Activated CD8-positive, alpha-beta T cell treated with anti-CD3 and anti-CD28 coated beads for 36 hours (primary cell): ENCODE measurements at regions of chr11 and their contacts with region 1.

Region 1: DNA sequence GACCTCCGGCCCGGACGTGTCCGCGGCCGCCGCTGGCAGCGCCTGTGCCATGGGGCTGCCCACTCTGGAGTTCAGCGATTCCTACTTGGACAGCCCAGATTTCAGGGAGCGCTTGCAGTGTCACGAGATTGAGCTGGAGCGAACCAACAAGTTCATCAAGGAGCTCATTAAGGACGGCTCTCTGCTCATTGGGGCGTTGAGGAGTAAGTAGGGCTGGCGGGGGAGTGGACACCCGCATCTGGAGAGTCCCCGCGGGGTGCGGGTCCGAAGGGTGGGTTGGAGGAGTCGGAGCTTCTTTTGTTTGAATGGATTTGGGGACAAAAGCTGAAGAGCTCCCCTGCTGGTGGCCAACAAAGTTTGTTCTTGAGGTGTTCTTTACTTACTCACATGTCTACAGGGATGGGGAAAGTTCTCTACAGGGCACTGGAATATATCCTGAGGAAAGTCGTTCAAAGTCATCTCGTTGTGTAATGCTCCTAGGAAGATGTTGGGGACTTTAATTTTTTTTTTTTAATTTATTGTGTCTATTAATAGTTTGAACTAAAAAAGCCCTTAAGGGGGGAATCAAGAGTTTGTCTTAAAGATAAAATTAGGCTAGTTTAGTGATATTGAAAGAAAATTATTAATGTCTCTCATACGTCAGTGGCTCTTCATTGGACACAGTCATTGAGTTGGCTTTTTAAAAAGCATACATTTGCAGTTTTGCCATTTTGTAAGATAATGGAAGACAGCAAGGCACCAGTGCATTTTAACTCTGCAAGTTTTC is 725 bp downstream of the ARHGAP42 start:
- DNase-seq: peak; percentile 29
- ATAC-seq: peak; percentile 52
- H3K4me3 Mint-ChIP-seq: peak overlapping the region; percentile 70
- H3K27ac Mint-ChIP-seq: no peak overlapping the region
- H3K4me1 Mint-ChIP-seq: peaks cover 21% of the 10 kb centered on the region
- H3K27me3 Mint-ChIP-seq: peaks cover 16% of the 10 kb centered on the region
- CTCF ChIP-seq: peak; percentile 52

Region 2: DNA sequence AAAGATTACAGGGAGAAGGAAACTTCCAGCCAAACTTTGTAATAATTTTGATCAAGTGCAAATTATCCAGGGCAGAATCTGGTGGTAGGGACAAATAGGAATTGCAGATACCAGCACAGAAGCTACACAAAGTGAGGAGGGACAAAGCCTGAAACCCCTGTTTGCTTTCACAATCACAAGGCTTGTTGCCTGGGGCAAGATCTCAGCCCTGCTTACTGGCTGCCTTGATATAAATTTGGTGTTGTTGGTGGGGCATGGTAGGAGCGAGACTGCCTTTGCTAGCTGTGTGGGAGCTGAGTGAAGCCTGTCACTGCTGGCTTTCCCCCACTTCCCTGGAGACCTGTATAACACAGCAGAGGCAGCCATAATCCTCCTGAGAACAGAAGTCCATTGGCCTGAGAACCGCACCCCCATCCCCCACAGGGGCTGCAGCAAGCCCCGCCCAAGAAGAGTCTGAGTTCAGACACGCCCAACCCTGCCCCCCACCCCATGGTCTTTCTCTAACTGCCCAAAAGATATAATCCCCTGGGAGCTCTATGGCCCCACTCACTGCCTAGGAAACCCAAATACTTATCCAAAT is 40.0 kb before region 1 on chr11:
- CTCF ChIA-PET with region 1: no interaction called
- POLR2A ChIA-PET with region 1: no interaction called
- intact Hi-C with region 1: no loop called
- DNase-seq: no peak
- ATAC-seq: no peak
- H3K4me3 Mint-ChIP-seq: no peak overlapping the region
- H3K27ac Mint-ChIP-seq: no peak overlapping the region
- H3K4me1 Mint-ChIP-seq: no peaks in the 10 kb centered on the region
- H3K27me3 Mint-ChIP-seq: peaks cover 4% of the 10 kb centered on the region
- CTCF ChIP-seq: no peak

Region 3: GRCh38 chr11:100855466-100856067 is 167.8 kb after region 1 on chr11:
- CTCF ChIA-PET with region 1: no interaction called
- POLR2A ChIA-PET with region 1: no interaction called
- intact Hi-C with region 1: loop called (anchors 10 kb)
- DNase-seq: no peak
- ATAC-seq: no peak
- H3K4me3 Mint-ChIP-seq: no peak overlapping the region
- H3K27ac Mint-ChIP-seq: no peak overlapping the region
- H3K4me1 Mint-ChIP-seq: no peaks in the 10 kb centered on the region
- H3K27me3 Mint-ChIP-seq: no peaks in the 10 kb centered on the region
- CTCF ChIP-seq: peak; percentile 46

Region 4: GRCh38 chr11:100925935-100926334 is 238.1 kb after region 1 on chr11:
- CTCF ChIA-PET with region 1: no interaction called
- POLR2A ChIA-PET with region 1: no interaction called
- intact Hi-C with region 1: loop called (anchors 10 kb)
- DNase-seq: no peak
- ATAC-seq: peak; percentile 24
- H3K4me3 Mint-ChIP-seq: no peak overlapping the region
- H3K27ac Mint-ChIP-seq: no peak overlapping the region
- H3K4me1 Mint-ChIP-seq: peaks cover 2% of the 10 kb centered on the region
- H3K27me3 Mint-ChIP-seq: no peaks in the 10 kb centered on the region
- CTCF ChIP-seq: no peak